ENCODE measurements at regions of chr14 and their contacts with region 1.

Region 1: GRCh38 chr14:54291491-54292191 is 105.2 kb upstream of the CDKN3 start:
- DNase-seq: no peak
- H3K4me3 Mint-ChIP-seq: no peak overlapping the region
- H3K27ac Mint-ChIP-seq: no peak overlapping the region
- H3K4me1 Mint-ChIP-seq: no peaks in the 10 kb centered on the region
- H3K27me3 Mint-ChIP-seq: peaks cover 17% of the 10 kb centered on the region

Region 2: DNA sequence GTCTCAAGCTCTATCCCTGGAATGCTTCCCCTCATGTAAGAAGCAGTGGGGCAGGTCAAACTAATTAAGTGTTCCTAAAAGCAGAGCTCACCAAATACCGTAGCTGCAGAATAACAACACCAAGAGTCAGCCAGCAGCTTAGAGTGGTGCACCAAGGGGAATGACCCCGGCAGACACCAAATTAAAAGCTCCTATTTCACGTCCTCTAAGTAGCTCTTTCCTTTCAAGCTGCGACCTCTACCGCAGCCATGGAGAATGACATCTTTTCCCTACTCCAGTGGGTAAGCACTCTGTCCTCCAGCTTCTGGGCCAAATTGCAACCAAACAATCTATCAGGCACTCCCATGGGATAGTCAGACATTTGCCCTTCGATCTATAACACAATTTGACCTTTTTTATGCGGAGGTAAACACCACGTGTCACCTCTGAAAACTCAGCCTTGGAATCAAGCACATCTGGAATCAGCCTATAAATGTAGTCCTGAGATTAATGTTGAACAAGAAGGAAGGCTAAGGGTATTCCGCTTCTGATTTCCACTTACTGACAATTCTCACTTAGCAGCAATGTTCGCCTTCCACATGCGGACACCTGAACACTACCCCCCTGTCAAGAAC is 37.5 kb after region 1 on chr14:
- CTCF ChIA-PET with region 1: interaction called, 3 read pairs
- intact Hi-C with region 1: loop called (anchors 1 kb)
- DNase-seq: peak; percentile 40
- H3K4me3 Mint-ChIP-seq: no peak overlapping the region
- H3K27ac Mint-ChIP-seq: no peak overlapping the region
- H3K4me1 Mint-ChIP-seq: no peaks in the 10 kb centered on the region
- H3K27me3 Mint-ChIP-seq: peaks cover 9% of the 10 kb centered on the region

Region 3: GRCh38 chr14:54396493-54397335 is 105.1 kb after region 1 on chr14 and contains the start of gene CDKN3:
- CTCF ChIA-PET with region 1: no interaction called
- intact Hi-C with region 1: no loop called
- DNase-seq: peak; percentile 99
- H3K4me3 Mint-ChIP-seq: peak within 1 kb of the TSS; percentile 86
- H3K27ac Mint-ChIP-seq: peak within 1 kb of the TSS; percentile 65
- H3K4me1 Mint-ChIP-seq: peaks cover 8% of the 10 kb centered on the region
- H3K27me3 Mint-ChIP-seq: peaks cover 2% of the 10 kb centered on the region
- total RNA-seq, gene CDKN3: 96.5 to 101 TPM

Measured in activated naive CD4-positive, alpha-beta T cell treated with anti-CD3 and anti-CD28 coated beads for 36 hours (primary cell).